Cardiac septum (tissue), 1 donor: ENCODE measurements at regions of chr6 and their contacts with region 1.

Region 1: DNA sequence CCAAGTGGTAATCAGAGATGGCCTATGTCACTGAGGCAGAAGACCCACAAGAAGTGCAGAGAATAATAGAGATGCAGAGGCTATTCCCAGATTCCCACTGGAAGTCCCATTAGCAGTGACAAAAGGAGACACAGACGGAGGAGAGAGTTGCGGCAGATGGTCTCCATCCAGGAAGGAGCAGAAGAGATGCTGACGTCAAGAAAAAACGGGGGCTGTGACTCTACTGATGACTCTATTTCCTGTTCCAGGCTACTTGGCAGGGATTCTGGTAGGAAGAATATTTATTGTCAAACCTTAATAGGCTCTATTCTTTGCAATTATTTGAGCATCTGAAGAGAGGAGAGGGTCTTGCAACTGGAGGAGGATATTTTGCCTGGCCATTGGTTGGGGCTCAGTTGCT is 246.0 kb upstream of the ECI2 start:
- DNase-seq: no peak

Region 2: DNA sequence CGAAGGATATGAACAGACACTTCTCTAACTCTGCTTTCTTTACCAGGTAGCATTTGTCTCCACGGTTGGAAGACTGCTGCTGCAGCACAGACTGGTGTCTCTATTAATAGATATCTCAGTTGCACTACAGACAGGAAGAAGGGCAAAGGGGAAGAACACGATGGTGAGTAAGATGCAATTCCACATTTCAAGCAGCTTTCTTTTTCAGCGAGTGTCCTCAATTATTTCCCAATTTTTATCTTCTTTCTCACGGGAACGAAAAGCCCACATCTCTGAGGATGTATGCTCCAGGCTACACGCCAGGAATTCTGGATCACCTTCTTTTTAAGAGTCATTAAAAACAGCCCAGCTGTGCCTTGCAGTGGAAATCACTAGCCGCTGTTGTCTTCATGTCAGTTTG is 65.6 kb after region 1 on chr6:
- intact Hi-C with region 1: loop called (anchors 5 kb)
- DNase-seq: no peak